CD4-positive, alpha-beta T cell (primary cell): ENCODE measurements at regions of chr1 and their contacts with region 1.

Region 1: DNA sequence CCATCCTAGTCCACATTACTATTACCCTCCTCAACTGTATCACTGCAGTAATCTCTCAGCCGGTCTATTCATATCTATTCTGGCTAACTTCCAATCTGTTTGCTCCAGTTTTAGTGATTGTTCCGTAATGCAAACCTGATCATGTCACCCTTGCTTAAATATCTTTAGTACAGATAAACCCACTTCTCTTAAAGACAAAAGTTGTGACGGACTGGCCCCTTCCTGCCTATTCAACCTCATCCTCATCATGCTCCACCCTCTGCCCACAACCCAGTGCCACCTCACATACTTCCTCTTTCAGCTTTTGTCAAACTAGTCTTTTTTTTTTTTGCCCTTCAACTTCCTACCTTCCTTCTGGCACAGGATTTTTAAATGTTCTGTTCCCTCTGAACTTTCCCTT is 2.8 kb upstream of the C1orf162 start:
- DNase-seq: peak; percentile 40 to 94 (median 62)
- ATAC-seq: peak; percentile 92
- H3K4me3 ChIP-seq: peak overlapping the region; percentile 38
- H3K4me3 Mint-ChIP-seq: no peak overlapping the region
- H3K27ac ChIP-seq: peak overlapping the region; percentile 75 to 84
- H3K27ac Mint-ChIP-seq: no peak overlapping the region
- H3K4me1 ChIP-seq: peaks cover 57% of the 10 kb centered on the region
- H3K4me1 Mint-ChIP-seq: peaks cover 24% of the 10 kb centered on the region
- H3K27me3 ChIP-seq: no peaks in the 10 kb centered on the region
- H3K27me3 Mint-ChIP-seq: no peaks in the 10 kb centered on the region
- CTCF ChIP-seq: no peak

Region 2: DNA sequence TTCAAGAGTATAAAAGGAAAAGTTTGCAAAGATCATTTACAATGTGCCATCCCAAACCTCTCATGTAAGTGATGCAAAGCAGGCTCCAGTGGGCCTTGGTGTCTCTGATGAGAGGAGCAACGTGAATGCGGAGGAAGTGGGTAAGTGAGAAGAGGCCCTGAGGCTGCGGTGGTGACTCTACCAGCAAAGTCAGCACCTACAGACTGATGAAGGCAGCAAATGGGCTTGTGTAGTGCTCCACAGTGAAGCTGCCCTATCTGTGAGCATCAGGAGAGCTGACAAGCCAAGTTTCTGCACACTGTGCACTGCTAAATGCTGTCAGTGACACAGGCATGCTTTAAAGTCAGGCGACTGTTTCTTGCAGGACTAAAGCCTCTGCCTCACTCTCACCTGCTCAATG is 133.0 kb after region 1 on chr1:
- CTCF ChIA-PET with region 1: no interaction called
- POLR2A ChIA-PET with region 1: no interaction called
- intact Hi-C with region 1: loop called in 1 of 2 experiments (anchors 5 kb)
- DNase-seq: peak; percentile 63 to 91 (median 76)
- ATAC-seq: peak; percentile 98
- H3K4me3 ChIP-seq: no peak overlapping the region
- H3K4me3 Mint-ChIP-seq: peak overlapping the region; percentile 37
- H3K27ac ChIP-seq: peak overlapping the region; percentile 30 to 63
- H3K27ac Mint-ChIP-seq: peak overlapping the region; percentile 84
- H3K4me1 ChIP-seq: peaks cover 74% of the 10 kb centered on the region
- H3K4me1 Mint-ChIP-seq: peaks cover 76% of the 10 kb centered on the region
- H3K27me3 ChIP-seq: no peaks in the 10 kb centered on the region
- H3K27me3 Mint-ChIP-seq: no peaks in the 10 kb centered on the region
- CTCF ChIP-seq: no peak